ENCODE measurements at regions of chr5 and their contacts with region 1.

Region 1: DNA sequence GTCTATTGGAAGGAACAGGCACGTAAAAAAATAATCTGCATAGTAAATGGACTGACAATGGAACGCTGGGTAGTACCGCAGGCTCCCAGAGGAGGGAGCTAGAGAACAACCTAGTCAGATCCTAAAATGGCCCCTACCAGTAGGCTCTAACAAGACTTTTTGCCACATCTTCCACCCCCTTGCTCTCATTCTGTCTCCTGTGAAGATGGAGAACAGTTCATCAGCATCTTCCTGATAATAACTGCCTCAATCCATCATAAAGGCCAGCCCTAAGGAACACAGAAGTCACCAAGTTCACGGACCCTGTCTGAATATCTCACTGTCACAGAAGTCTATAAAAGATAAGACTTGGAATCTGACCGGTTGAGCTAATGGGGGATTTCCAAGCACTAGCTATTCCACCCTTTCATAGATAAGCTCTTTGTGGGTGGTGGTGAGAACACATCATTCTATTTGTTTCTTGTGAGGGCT is 133.4 kb downstream of the SLC1A3 start:
- DNase-seq: peak; percentile 31 to 76 (median 69)
- ATAC-seq: peak; percentile 97
- H3K4me3 ChIP-seq: no peak overlapping the region
- H3K4me3 Mint-ChIP-seq: no peak overlapping the region
- H3K27ac ChIP-seq: no peak overlapping the region
- H3K27ac Mint-ChIP-seq: no peak overlapping the region
- H3K4me1 ChIP-seq: peaks cover 6% of the 10 kb centered on the region
- H3K4me1 Mint-ChIP-seq: peaks cover 11% of the 10 kb centered on the region
- H3K27me3 ChIP-seq: no peaks in the 10 kb centered on the region
- H3K27me3 Mint-ChIP-seq: peaks cover 39% of the 10 kb centered on the region
- CTCF ChIP-seq: peak; percentile 76

Region 2: GRCh38 chr5:36285837-36286615 is 453.8 kb before region 1 on chr5:
- CTCF ChIA-PET with region 1: no interaction called
- POLR2A ChIA-PET with region 1: no interaction called
- intact Hi-C with region 1: no loop called
- DNase-seq: no peak
- ATAC-seq: no peak
- H3K4me3 ChIP-seq: no peak overlapping the region
- H3K4me3 Mint-ChIP-seq: no peak overlapping the region
- H3K27ac ChIP-seq: no peak overlapping the region
- H3K27ac Mint-ChIP-seq: no peak overlapping the region
- H3K4me1 ChIP-seq: no peaks in the 10 kb centered on the region
- H3K4me1 Mint-ChIP-seq: no peaks in the 10 kb centered on the region
- H3K27me3 ChIP-seq: no peaks in the 10 kb centered on the region
- H3K27me3 Mint-ChIP-seq: no peaks in the 10 kb centered on the region
- CTCF ChIP-seq: no peak

Region 3: GRCh38 chr5:36870399-36871040 is 130.7 kb after region 1 on chr5:
- CTCF ChIA-PET with region 1: interaction called, 8 read pairs
- POLR2A ChIA-PET with region 1: interaction called, 4 read pairs
- intact Hi-C with region 1: loop called (anchors 1 kb)
- DNase-seq: peak in 2 of 9 experiments; percentile 73 to 82
- ATAC-seq: peak; percentile 75
- H3K4me3 ChIP-seq: no peak overlapping the region
- H3K4me3 Mint-ChIP-seq: no peak overlapping the region
- H3K27ac ChIP-seq: no peak overlapping the region
- H3K27ac Mint-ChIP-seq: peak overlapping the region; percentile 20
- H3K4me1 ChIP-seq: peaks cover 25% of the 10 kb centered on the region
- H3K4me1 Mint-ChIP-seq: peaks cover 46% of the 10 kb centered on the region
- H3K27me3 ChIP-seq: no peaks in the 10 kb centered on the region
- H3K27me3 Mint-ChIP-seq: no peaks in the 10 kb centered on the region
- CTCF ChIP-seq: peak; percentile 67

Region 4: DNA sequence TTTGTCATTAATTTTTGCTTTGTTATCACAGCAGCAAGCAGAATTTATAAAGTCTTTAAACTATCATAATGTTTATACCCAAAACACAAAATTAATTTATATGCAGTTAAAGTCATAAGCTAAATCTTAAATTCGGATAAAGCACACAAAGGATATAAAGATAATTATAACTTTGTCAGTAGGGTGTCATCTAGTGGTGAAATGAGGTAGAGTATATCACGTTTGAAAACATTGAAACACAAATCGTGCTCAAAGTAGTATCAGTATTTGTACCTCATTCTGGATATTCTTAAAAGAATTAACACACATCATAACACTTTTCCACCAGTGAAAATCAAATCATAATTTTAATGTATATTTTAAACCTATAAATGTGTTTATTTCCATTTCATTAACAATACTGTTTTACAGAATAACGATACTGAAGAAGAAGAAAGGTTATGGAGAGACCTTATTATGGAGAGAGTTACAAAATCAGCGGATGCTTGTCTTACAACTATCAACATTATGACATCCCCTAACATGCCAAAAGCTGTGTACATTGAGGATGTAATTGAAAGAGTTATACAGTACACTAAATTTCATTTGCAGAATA is 266.3 kb after region 1 on chr5:
- CTCF ChIA-PET with region 1: interaction called, 12 read pairs
- POLR2A ChIA-PET with region 1: no interaction called
- intact Hi-C with region 1: loop called in 1 of 2 experiments (anchors 2 kb)
- DNase-seq: peak in 2 of 9 experiments; percentile 16 to 36
- ATAC-seq: peak; percentile 51
- H3K4me3 ChIP-seq: no peak overlapping the region
- H3K4me3 Mint-ChIP-seq: no peak overlapping the region
- H3K27ac ChIP-seq: no peak overlapping the region
- H3K27ac Mint-ChIP-seq: no peak overlapping the region
- H3K4me1 ChIP-seq: no peaks in the 10 kb centered on the region
- H3K4me1 Mint-ChIP-seq: no peaks in the 10 kb centered on the region
- H3K27me3 ChIP-seq: no peaks in the 10 kb centered on the region
- H3K27me3 Mint-ChIP-seq: no peaks in the 10 kb centered on the region
- CTCF ChIP-seq: peak; percentile 62

Measured in CD8-positive, alpha-beta T cell (primary cell).